AG04450 (cell line): ENCODE measurements at regions of chr10 and their contacts with region 1.

Region 1: GRCh38 chr10:32225976-32226375 is 121.0 kb downstream of the EPC1 start:
- DNase-seq: no peak
- H3K4me3 ChIP-seq: no peak overlapping the region
- H3K27ac ChIP-seq: no peak overlapping the region
- H3K27me3 ChIP-seq: no peaks in the 10 kb centered on the region
- CTCF ChIP-seq: no peak

Region 2: GRCh38 chr10:32125023-32125422 is 101.0 kb before region 1 on chr10:
- CTCF ChIA-PET with region 1: no interaction called
- POLR2A ChIA-PET with region 1: no interaction called
- DNase-seq: no peak
- H3K4me3 ChIP-seq: no peak overlapping the region
- H3K27ac ChIP-seq: no peak overlapping the region
- H3K27me3 ChIP-seq: peaks cover 9% of the 10 kb centered on the region
- CTCF ChIP-seq: no peak

Region 3: GRCh38 chr10:33093362-33093761 is 867.4 kb after region 1 on chr10:
- CTCF ChIA-PET with region 1: interaction called, 10 read pairs
- POLR2A ChIA-PET with region 1: no interaction called
- DNase-seq: no peak
- H3K4me3 ChIP-seq: no peak overlapping the region
- H3K27ac ChIP-seq: no peak overlapping the region
- H3K27me3 ChIP-seq: no peaks in the 10 kb centered on the region
- CTCF ChIP-seq: no peak